Gastrocnemius medialis (tissue), 4 donors: ENCODE measurements at regions of chr7 and their contacts with region 1.

Region 1: GRCh38 chr7:70569335-70569819 is 562.6 kb upstream of the GALNT17 start:
- DNase-seq: peak; percentile 53 to 77
- ATAC-seq: peak; percentile 94 to 95
- H3K4me3 ChIP-seq: peak overlapping the region in 1 of 4 donors; percentile 23
- H3K27ac ChIP-seq: peak overlapping the region; percentile 82 to 88 (median 85)
- H3K4me1 ChIP-seq: peaks cover 20 to 24% of the 10 kb centered on the region in 2 donors
- H3K27me3 ChIP-seq: no peaks in the 10 kb centered on the region
- CTCF ChIP-seq: no peak
- POLR2A ChIP-seq: no peak

Region 2: GRCh38 chr7:70500261-70500660 is 69.1 kb before region 1 on chr7:
- in situ Hi-C with region 1: no loop called
- intact Hi-C with region 1: loop called (anchors 5 kb)
- DNase-seq: no peak
- ATAC-seq: no peak
- H3K4me3 ChIP-seq: no peak overlapping the region
- H3K27ac ChIP-seq: no peak overlapping the region
- H3K4me1 ChIP-seq: peaks cover 3 to 6% of the 10 kb centered on the region in 2 donors
- H3K27me3 ChIP-seq: no peaks in the 10 kb centered on the region
- CTCF ChIP-seq: no peak
- POLR2A ChIP-seq: no peak

Region 3: GRCh38 chr7:70539205-70539604 is 30.2 kb before region 1 on chr7:
- in situ Hi-C with region 1: no loop called
- intact Hi-C with region 1: loop called (anchors 1 kb)
- DNase-seq: no peak
- ATAC-seq: peak; percentile 36 to 48
- H3K4me3 ChIP-seq: no peak overlapping the region
- H3K27ac ChIP-seq: peak overlapping the region in 2 of 4 donors; percentile 11 to 25
- H3K4me1 ChIP-seq: peaks cover 16 to 29% of the 10 kb centered on the region in 2 donors
- H3K27me3 ChIP-seq: no peaks in the 10 kb centered on the region
- CTCF ChIP-seq: no peak
- POLR2A ChIP-seq: no peak